Uterus (tissue), 4 donors: ENCODE measurements at regions of chr9 and their contacts with region 1.

Region 1: DNA sequence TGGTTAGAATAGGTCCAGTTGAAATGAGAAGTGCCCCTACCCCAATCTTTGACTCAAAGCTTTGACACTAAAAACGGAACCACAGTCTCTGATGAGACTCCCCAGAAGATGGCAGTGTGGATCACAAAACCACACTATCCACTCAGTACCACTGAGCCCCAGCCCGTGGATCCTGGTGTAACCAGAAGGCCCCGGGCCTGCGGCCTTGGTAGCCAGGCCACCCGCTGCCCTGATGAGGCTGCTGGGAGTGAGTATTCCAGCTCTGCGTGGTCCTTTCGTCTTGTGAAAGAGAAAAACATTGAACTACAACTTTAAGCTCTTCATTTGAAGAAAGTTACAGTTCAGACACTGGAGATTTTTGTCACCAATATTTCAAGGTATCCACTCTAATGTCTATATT is 42.2 kb upstream of the FBP1 start:
- DNase-seq: peak; percentile 69 to 81
- H3K4me3 ChIP-seq: no peak overlapping the region
- H3K27ac ChIP-seq: peak overlapping the region; percentile 28 to 35
- H3K4me1 ChIP-seq: no peaks in the 10 kb centered on the region
- H3K27me3 ChIP-seq: no peaks in the 10 kb centered on the region
- CTCF ChIP-seq: peak; percentile 74 to 90 (median 79)
- POLR2A ChIP-seq: no peak

Region 2: GRCh38 chr9:93846349-93846748 is 835.2 kb before region 1 on chr9:
- intact Hi-C with region 1: no loop called
- DNase-seq: no peak
- H3K4me3 ChIP-seq: no peak overlapping the region
- H3K27ac ChIP-seq: no peak overlapping the region
- H3K4me1 ChIP-seq: no peaks in the 10 kb centered on the region
- H3K27me3 ChIP-seq: no peaks in the 10 kb centered on the region
- CTCF ChIP-seq: no peak
- POLR2A ChIP-seq: no peak

Region 3: DNA sequence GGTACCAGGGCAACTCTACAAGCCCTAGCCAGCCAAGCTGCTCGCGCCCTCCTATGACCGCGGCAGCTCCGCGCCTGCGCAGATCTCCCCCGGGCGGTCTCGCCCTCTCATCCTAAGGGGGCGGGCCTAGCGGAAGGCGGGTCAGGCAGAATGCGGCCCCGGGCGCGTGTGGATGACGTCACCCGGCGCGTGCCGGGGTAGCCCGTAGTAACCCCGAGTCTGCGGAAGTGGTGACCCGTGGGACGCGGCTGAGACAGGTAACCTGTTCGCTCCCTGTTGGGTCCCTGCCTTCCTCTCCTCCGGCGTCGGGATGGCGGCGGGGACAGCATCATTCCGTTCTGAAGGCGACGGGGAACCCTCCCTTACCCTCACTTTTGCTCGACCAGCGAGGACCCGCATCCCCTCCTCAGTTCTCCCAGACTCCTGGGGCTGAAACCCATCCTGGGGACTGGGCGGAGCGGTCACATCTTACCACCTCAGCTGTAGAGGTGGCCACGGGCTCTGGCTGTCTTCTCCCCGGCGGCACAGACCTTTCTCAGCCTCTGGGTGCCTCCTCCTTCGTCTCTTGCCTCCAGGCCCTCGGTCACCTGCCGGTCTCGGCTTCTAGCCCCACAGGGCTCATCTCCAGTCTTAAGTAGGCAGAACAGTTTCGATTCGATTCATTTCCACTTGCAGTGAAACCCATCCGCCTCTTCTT is 45.1 kb after region 1 on chr9 and contains the start of gene AOPEP:
- intact Hi-C with region 1: no loop called
- DNase-seq: peak; percentile 98
- H3K4me3 ChIP-seq: peak within 1 kb of the TSS; percentile 60 to 94
- H3K27ac ChIP-seq: peak within 1 kb of the TSS; percentile 87
- H3K4me1 ChIP-seq: peaks cover 0 to 4% of the 10 kb centered on the region in 2 donors
- H3K27me3 ChIP-seq: no peaks in the 10 kb centered on the region
- CTCF ChIP-seq: peak in 2 of 4 experiments; percentile 29 to 35
- POLR2A ChIP-seq: peak; percentile 51 to 81
- total RNA-seq, gene AOPEP: 80.7 to 428 (median 126) TPM

Region 4: DNA sequence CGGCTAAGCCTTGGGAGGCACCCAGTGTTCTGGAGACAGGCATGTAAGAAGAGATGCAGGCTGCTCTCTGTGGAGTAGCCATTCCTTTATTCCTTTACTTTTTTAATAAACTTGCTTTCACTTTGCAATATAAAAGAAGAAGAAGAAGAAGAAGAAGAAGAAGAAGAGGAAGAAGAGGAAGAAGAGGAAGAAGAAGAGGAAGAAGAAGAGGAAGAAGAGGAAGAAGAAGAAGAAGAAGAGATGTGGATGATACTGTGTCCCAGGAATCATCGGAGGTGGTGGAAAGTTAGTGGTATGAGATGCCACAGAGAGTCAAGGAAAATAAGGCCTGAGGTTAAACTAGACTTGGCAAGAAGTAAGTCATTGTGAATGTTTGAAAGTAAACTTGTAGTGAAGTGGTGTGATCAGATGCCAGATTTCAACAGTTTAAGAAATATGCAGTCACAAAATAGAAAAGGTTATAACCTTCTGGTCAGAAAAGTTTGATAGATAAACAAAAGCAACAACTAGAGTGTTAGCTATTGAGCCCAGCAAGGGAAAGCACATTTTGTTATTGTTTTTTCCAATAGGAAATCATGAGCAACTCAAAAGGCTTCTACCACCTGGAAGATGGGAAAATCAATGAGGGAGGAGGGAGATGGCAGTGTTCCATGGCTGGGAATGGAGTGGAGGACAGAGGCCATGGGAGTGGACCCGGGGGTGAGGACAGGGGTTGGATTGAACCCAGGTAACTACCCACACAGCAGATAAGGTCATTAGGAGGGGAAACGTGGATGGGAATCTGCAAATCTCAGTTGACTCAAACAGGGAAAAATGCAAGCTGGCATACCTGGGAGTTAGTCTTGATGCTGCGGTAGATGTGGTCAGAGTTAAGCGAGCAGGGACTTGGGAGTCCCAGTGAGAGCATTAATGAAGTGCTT is 61.8 kb after region 1 on chr9:
- intact Hi-C with region 1: no loop called
- DNase-seq: no peak
- H3K4me3 ChIP-seq: no peak overlapping the region
- H3K27ac ChIP-seq: no peak overlapping the region
- H3K4me1 ChIP-seq: peaks cover 0 to 3% of the 10 kb centered on the region in 2 donors
- H3K27me3 ChIP-seq: no peaks in the 10 kb centered on the region
- CTCF ChIP-seq: no peak
- POLR2A ChIP-seq: no peak

Region 5: GRCh38 chr9:94767331-94768072 is 86.0 kb after region 1 on chr9:
- intact Hi-C with region 1: loop called (anchors 10 kb)
- DNase-seq: no peak
- H3K4me3 ChIP-seq: no peak overlapping the region
- H3K27ac ChIP-seq: no peak overlapping the region
- H3K4me1 ChIP-seq: no peaks in the 10 kb centered on the region
- H3K27me3 ChIP-seq: no peaks in the 10 kb centered on the region
- CTCF ChIP-seq: no peak
- POLR2A ChIP-seq: no peak

Region 6: DNA sequence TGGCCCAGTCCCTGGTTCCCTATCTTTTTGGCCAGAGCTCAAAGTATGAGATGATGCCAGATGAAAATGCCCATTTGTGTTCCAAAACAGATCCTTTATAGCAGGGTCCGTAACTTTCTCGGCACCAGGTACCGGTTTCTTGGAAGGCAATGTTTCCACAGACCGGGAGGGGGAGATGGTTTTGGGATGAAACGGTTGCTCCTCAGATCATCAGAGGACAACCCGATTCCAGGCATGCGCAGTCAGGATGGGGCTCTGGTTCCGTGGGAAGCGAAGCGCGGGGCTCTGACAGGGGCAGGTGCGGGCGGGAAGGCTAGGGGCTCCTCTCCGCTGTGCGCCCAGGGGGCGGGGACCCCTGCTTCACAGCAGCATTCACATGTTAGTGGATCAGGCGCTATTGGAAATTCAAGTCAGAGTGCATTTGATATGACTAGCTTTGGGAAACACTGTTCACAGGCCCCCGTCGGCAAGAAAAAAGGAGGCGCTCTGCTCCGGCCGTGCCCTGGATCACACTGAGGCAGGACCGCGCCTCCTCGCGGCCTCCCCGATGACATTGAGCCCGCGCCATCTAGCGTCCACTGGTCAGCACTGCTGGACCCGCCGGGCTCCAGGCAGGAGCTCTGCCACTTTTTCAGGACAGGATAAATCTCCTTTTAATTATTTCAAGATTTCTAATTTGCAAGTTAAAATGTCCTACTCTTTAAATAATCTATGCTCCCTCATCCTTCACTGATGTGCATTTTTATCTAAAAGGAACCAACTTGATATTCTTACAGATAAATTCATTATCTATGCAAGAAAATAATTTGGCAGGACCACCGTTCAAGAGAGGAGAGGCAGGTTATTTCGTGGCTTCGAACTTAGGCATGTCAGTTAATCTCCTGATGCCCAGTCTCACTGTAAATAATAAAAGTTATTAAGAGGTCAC is 446.0 kb after region 1 on chr9:
- intact Hi-C with region 1: loop called (anchors 5 kb)
- DNase-seq: peak; percentile 88
- H3K4me3 ChIP-seq: peak overlapping the region; percentile 33 to 34
- H3K27ac ChIP-seq: peak overlapping the region; percentile 60 to 72
- H3K4me1 ChIP-seq: peaks cover 0 to 5% of the 10 kb centered on the region in 2 donors
- H3K27me3 ChIP-seq: no peaks in the 10 kb centered on the region
- CTCF ChIP-seq: peak; percentile 95 to 99 (median 98)
- POLR2A ChIP-seq: peak in 1 of 2 donors; percentile 31